Posterior cingulate gyrus (tissue), 11 donors: ENCODE measurements at regions of chr1 and their contacts with region 1.

Region 1: GRCh38 chr1:35930593-35931445 is at the start of gene AGO3:
- DNase-seq: peak; percentile 72 to 97 (median 84)

Region 2: GRCh38 chr1:35882945-35883634 is 47.7 kb before region 1 on chr1 and contains the start of gene AGO1:
- intact Hi-C with region 1: loop called (anchors 2 kb)
- DNase-seq: peak; percentile 90 to 99 (median 95)

Region 3: GRCh38 chr1:36088575-36089443 is 158.0 kb after region 1 on chr1 and contains the start of gene ADPRS:
- intact Hi-C with region 1: loop called (anchors 5 kb)
- DNase-seq: peak; percentile 85 to 99 (median 89)